ENCODE measurements at regions of chr6 and their contacts with region 1.

Region 1: DNA sequence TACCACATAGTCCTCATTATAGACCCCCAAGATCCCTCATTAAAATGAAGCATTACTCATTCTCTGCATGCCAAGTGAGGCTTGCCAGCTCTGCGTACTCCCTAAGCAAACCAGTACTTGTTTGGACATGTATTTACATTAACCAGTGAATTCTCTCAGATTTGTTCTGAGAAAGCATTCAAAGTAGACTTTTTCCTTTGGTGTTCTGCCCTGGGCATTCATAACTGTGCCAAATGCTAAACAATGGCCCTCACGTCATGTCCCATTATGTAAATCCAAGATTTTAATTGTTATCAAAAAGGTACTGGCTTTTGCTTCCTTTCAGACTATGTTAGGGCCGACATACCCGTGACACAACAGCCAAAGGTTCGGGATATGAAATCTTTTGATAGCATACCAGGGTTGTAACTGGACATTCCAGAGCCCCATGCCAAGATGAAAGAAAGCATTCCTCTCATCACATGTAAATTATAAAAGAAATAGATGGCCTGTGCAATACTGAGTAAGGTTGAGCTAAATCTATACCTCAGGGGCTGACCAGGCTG is 164.2 kb downstream of the ADAT2 start:
- DNase-seq: no peak
- ATAC-seq: no peak
- H3K4me3 ChIP-seq: no peak overlapping the region
- H3K27ac ChIP-seq: no peak overlapping the region
- H3K4me1 ChIP-seq: no peaks in the 10 kb centered on the region
- H3K27me3 ChIP-seq: no peaks in the 10 kb centered on the region
- CTCF ChIP-seq: no peak

Region 2: GRCh38 chr6:142679907-142680700 is 606.2 kb before region 1 on chr6:
- intact Hi-C with region 1: loop called in 1 of 2 experiments (anchors 10 kb)
- DNase-seq: peak in 1 of 2 donors; percentile 34
- ATAC-seq: no peak
- H3K4me3 ChIP-seq: no peak overlapping the region
- H3K27ac ChIP-seq: no peak overlapping the region
- H3K4me1 ChIP-seq: no peaks in the 10 kb centered on the region
- H3K27me3 ChIP-seq: peaks cover 0 to 3% (median 0%) of the 10 kb centered on the region in 3 donors
- CTCF ChIP-seq: no peak

Region 3: DNA sequence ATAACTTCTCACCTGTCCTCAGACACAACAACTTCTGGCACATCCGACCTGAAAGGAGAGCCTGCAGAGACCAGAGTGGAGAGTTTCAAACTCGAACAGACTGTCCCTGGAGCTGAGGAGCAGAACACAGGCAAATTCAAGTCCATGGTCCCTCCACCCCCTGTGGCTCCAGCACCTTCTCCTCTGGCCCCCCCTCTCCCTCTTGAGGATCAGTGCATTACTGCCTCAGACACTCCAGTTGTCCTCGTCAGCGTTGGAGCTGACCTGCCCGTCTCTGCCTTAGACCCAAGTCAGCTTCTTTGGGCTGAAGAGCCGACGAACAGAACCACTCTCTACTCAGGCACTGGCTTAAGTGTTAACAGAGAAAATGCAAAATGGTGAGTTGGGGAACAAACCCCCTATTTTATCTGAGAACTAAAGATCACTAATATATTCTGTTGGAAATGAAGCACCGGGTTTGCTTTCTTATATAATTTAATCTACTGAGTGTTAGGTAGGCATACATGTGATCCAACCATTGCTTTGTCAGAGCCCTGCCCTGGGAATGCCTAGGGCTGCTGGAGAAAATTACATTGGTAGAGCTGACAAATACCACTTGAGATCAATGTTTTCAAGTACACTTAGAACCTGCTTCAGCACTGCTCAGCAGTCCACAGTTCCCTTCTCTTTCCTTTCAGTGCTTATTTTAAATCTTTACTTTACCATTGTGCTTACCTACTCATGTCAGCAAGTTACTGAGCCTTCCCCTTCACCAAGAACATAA is 479.3 kb after region 1 on chr6:
- intact Hi-C with region 1: no loop called
- DNase-seq: no peak
- ATAC-seq: no peak
- H3K4me3 ChIP-seq: no peak overlapping the region
- H3K27ac ChIP-seq: no peak overlapping the region
- H3K4me1 ChIP-seq: no peaks in the 10 kb centered on the region
- H3K27me3 ChIP-seq: no peaks in the 10 kb centered on the region
- CTCF ChIP-seq: no peak

Measured in psoas muscle (tissue), 8 donors.